ENCODE measurements at regions of chr7 and their contacts with region 1.

Region 1: GRCh38 chr7:107879400-107880035 is 11.5 kb upstream of the DLD start:
- DNase-seq: no peak
- ATAC-seq: peak; percentile 74
- H3K4me3 Mint-ChIP-seq: no peak overlapping the region
- H3K27ac Mint-ChIP-seq: no peak overlapping the region
- H3K4me1 Mint-ChIP-seq: peaks cover under 1% of the 10 kb centered on the region
- H3K27me3 Mint-ChIP-seq: peaks cover 20% of the 10 kb centered on the region
- CTCF ChIP-seq: no peak

Region 2: DNA sequence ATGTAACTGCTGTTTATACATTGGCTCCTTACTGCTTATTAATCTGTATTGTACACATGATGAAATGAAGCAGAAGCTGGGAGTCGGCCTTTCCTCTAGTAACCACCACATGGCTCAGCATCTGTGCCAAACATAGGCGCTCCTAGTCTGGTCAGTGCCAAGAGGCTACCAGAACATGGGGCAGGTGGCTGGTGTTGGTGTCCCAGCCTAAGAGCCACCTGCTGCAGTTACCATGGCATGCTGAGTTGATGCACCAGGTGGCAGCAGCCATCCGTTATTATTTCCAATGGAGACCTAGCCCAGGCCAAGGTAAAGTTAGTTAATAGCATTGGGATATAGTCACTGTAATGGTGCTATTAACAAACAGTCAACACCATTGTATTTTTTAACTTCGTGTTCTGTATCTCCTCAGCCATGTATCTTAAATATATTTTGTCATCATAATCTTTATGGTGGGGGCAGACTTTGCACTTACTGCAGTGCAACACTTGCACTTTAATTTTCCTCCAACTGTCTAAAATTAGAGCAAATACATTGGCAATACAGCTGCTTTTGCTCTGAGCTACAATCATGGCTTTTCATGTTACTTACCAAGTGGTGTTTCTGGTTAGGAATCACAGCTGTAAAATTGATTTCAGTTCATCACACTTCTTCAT is 677.6 kb before region 1 on chr7:
- CTCF ChIA-PET with region 1: interaction called, 3 read pairs
- POLR2A ChIA-PET with region 1: no interaction called
- intact Hi-C with region 1: loop called (anchors 5 kb)
- DNase-seq: no peak
- ATAC-seq: no peak
- H3K4me3 Mint-ChIP-seq: no peak overlapping the region
- H3K27ac Mint-ChIP-seq: peak overlapping the region; percentile 1
- H3K4me1 Mint-ChIP-seq: no peaks in the 10 kb centered on the region
- H3K27me3 Mint-ChIP-seq: no peaks in the 10 kb centered on the region
- CTCF ChIP-seq: no peak

Region 3: DNA sequence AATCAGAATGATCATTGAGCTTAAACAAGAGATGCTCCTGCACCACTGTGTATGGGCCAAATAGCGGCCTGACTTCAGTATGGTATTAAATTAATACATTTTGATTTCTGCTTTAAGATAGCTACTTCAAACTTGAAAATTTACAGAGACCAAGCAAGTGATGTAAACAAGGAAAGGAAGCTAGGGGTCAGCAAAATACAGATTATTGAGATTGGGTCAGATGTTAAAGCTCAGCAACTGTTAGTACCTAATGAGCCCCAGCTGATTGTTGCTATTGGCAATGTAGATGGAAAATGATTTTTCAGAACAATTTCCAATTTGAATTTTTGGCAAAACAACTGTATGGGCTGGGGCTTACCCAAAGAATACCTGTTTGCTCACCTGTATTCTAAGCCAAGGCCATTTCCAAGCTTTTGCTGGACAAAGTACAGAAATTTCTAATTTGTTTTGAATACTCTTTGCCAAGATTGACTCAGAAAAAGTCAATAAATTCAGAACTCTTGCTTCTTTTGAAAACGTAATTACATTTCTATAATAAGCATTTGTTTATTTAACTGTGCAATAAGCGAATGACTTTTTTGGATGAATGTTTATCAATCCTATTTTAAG is 11.6 kb before region 1 on chr7:
- CTCF ChIA-PET with region 1: interaction called, 12 read pairs
- POLR2A ChIA-PET with region 1: no interaction called
- intact Hi-C with region 1: no loop called
- DNase-seq: no peak
- ATAC-seq: no peak
- H3K4me3 Mint-ChIP-seq: no peak overlapping the region
- H3K27ac Mint-ChIP-seq: no peak overlapping the region
- H3K4me1 Mint-ChIP-seq: no peaks in the 10 kb centered on the region
- H3K27me3 Mint-ChIP-seq: peaks cover 4% of the 10 kb centered on the region
- CTCF ChIP-seq: no peak

Region 4: GRCh38 chr7:108066486-108066885 is 187.0 kb after region 1 on chr7:
- CTCF ChIA-PET with region 1: no interaction called
- POLR2A ChIA-PET with region 1: no interaction called
- intact Hi-C with region 1: no loop called
- DNase-seq: no peak
- ATAC-seq: no peak
- H3K4me3 Mint-ChIP-seq: no peak overlapping the region
- H3K27ac Mint-ChIP-seq: no peak overlapping the region
- H3K4me1 Mint-ChIP-seq: no peaks in the 10 kb centered on the region
- H3K27me3 Mint-ChIP-seq: peaks cover 6% of the 10 kb centered on the region
- CTCF ChIP-seq: no peak

Region 5: GRCh38 chr7:108203537-108203936 is 324.0 kb after region 1 on chr7:
- CTCF ChIA-PET with region 1: no interaction called
- POLR2A ChIA-PET with region 1: no interaction called
- intact Hi-C with region 1: no loop called
- DNase-seq: no peak
- ATAC-seq: no peak
- H3K4me3 Mint-ChIP-seq: no peak overlapping the region
- H3K27ac Mint-ChIP-seq: no peak overlapping the region
- H3K4me1 Mint-ChIP-seq: peaks cover 3% of the 10 kb centered on the region
- H3K27me3 Mint-ChIP-seq: peaks cover 2% of the 10 kb centered on the region
- CTCF ChIP-seq: no peak

Measured in activated B cell treated with CpG ODN at 0.5 μM for 24 hours (primary cell).